ENCODE measurements at regions of chr10 and their contacts with region 1.

Region 1: DNA sequence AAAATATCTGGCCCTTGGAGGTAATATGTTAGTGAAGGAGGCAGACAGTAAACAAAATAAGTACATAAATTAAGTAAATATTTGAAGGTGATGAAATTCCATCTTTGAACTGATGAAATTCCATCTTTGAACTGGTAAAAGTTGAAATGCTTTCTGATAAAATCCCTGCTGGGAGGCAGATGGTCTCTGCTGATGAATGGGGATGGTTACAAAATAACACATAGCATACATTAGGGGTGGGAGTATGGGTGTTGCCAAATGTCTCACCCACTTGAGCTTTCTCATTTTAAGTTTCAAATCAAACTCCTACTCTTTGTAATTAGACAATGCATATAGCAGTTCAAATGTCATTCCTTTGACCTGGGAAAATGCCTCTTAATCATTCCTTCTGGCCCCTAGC is 77.5 kb upstream of the SORCS3 start:
- DNase-seq: no peak

Region 2: GRCh38 chr10:104456802-104457542 is 106.6 kb before region 1 on chr10:
- intact Hi-C with region 1: loop called in 1 of 2 experiments (anchors 2 kb)
- DNase-seq: no peak

Region 3: DNA sequence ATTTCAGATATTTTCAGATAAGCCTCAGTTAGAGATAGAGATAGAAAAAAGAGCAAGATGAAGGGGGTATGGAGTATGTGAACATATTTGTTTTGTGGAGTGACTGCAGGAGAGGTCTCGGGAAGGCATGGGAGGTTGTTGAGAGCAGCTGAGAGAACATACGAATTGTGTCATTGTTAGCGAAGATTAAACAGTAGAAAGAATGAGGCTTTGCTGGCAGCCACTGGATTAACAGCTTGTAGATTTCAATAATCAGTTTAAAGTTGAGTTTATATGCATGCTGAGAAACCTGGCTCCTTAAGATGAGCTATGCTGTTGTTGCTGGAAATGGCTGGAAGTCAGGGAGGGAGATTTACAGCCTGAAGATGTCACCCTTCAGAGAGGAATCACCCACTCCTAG is 23.4 kb before region 1 on chr10:
- intact Hi-C with region 1: no loop called
- DNase-seq: no peak

Region 4: DNA sequence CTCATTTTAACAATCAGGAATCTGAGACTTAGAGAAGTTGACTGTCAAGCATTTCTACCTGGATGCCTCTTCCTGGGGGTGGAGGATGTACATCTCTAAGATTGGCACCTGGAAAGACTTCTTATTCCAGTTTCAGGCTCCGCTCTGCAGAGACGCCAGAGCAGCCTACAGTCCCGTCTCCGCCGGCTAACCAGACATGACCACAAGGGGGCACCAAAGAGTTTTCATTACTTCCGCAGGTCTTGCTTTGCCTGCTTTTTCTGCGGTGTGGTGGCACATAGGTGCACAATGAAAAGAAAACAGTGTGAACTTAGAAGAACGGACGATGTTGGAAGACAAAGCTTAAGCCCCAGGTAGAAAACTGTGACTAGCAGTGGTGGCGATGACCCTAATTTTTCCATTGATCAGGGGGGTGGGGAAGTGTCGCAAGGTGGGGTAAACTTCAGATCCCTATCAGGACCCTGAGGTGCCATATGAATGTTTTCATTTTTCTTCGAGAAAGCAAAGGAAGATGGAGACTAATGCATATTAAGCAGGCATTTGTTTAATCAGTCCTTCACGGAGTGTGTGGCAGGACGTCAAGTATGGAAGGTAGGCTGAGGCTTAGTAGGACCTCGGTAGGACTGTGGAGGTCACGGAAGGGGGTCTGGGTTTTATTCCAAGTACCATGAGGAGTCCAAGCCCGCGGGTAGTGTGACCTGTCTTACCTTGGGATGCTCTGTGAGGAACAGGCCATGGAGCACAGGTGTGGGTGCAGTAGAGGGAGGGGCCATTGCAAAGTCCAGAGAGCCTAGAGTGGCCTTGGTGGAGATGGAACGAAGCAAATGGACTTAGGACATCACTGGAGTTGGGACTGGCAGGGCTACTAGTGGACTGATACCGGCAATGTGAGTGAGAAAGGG is 17.5 kb after region 1 on chr10:
- intact Hi-C with region 1: no loop called
- DNase-seq: peak; percentile 86

Measured in posterior vena cava (tissue), 2 donors.